ENCODE measurements at regions of chr6 and their contacts with region 1.

Region 1: GRCh38 chr6:91580635-91581034 is 993.8 kb upstream of the MAP3K7 start:
- DNase-seq: no peak

Region 2: GRCh38 chr6:91387290-91388062 is 193.2 kb before region 1 on chr6:
- intact Hi-C with region 1: no loop called
- DNase-seq: peak in 1 of 10 donors; percentile 42

Region 3: GRCh38 chr6:91633374-91634111 is 52.9 kb after region 1 on chr6:
- intact Hi-C with region 1: loop called (anchors 1 kb)
- DNase-seq: no peak